ENCODE measurements at regions of chr1 and their contacts with region 1.

Region 1: DNA sequence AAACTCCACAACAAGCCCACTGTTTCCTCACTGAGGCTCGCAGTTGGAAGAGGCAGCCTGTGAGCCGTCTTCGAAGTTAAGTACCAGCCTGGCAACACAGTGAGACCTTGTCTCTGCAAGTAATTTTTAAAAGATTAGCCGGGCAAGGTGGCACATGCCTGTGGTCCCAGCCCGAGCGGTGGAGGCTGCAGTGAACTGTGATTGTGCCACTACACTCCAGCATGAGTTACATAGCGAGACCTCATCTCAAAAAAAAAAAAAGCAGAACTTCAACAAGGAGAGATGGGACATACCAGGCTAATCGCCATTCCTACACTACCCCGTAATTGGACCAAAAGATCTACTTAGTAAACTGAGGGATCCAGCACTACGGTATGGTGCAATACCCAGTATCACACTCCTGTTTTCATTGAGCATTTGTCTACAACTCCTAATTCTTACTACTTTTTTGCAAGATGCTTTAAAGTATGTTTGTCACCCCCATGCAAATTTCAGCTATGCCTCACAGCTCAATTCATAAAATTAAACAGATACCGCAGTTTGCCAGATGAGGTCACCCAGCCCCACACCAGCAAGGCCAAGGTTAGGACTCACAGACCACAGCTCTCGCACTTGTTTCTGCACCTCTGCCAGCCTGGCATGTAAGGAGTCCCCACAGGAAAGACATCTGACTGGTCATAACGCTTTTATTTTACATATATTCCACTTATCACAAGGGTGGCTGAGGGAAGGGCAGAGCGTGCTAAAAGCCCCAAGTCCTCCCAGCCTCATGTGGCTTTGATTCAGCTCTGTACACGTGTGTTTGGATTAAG is 21.0 kb downstream of the SDE2 start:
- DNase-seq: no peak
- H3K4me3 ChIP-seq: no peak overlapping the region
- CTCF ChIP-seq: no peak

Region 2: DNA sequence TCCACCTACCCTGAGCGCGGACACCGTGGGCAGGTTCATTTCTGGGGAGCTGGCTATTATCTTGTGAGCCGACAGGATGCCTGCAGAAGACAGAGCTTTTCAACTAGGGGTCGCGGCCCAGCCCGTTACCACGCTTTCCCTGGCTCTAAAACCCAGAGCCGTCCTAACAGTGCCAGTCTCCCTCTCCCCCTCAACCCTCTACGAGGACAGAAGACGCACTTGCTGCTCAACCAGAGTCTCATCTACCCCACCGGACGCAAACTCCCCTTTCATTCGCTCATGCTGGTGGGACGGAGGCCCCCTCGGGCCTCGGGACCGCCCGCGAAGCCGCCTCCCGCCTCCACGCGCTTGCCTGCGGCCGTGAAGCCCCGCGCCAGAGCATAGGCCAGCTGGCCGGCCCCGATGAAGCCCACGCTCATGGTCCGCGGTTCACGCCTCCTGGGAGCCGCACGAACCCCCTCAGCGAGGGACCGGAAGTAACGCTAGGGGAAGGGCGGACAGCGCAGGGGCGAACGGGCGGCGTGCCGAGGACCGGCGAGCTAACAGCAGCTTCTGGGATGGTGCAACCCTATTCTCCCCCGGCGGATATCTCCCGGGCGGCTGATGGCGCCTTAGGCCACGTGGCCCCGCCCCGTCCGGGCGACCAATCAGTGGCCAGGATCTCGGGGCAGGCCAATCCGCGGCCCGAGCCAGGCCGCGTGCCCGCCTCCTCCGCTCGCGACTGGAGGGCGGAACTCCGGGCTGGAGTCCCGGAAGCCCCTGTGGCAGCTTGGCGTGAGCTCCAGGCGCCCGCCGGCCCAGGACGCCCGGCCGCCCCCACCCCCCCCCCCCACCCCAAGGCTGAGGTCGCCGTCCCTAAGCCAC is 54.2 kb before region 1 on chr1 and contains the start of gene PYCR2:
- CTCF ChIA-PET with region 1: interaction called, 10 read pairs
- POLR2A ChIA-PET with region 1: no interaction called
- DNase-seq: peak; percentile 75
- H3K4me3 ChIP-seq: peak within 1 kb of the TSS; percentile 95
- CTCF ChIP-seq: no peak

Region 3: DNA sequence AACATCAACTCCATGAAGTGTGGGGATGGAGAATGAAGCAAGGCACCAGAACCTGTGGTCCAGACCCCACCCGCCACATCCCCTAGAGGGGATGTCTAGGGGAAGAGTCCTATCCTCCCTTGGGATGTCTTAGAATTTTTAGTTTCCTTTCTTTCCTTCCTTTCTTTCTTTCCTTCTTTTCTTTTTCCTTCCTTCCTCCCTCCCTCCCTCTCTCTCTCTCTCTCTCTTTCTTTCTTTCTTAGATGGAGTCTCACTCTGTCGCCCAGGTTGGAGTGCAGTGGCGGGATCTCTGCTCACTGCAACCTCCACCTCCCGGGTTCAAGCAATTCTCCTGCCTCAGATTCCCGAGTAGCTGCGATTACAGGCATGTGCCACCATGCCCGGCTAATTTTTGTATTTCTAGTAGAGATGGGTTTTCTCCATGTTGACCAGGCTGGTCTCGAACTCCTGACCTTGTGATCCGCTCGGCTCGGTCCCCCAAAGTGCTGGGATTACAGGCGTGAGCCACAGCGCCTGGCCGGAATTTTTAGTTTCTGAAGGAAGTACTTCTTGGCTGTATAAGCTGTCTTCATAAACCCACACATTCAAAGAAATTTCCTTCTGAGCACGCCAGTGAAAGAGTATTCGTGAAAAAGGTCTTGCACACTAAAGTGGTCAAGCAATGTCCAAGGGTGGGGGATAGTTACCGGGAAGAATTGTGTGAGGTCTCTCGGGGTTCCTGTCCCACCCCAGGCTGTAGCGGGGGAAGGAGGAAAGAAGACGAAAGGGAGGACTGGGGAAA is 16.3 kb before region 1 on chr1:
- CTCF ChIA-PET with region 1: interaction called, 14 read pairs
- POLR2A ChIA-PET with region 1: no interaction called
- DNase-seq: no peak
- H3K4me3 ChIP-seq: no peak overlapping the region
- CTCF ChIP-seq: no peak

Region 4: GRCh38 chr1:226549937-226550670 is 572.0 kb after region 1 on chr1:
- CTCF ChIA-PET with region 1: no interaction called
- POLR2A ChIA-PET with region 1: no interaction called
- DNase-seq: no peak
- H3K4me3 ChIP-seq: no peak overlapping the region
- CTCF ChIP-seq: no peak